Right ventricle myocardium superior (tissue), 1 donor: ENCODE measurements at regions of chr13 and their contacts with region 1.

Region 1: GRCh38 chr13:106536244-106537034 is 977 bp upstream of the EFNB2 start:
- DNase-seq: peak; percentile 94
- ATAC-seq: peak; percentile 86

Region 2: GRCh38 chr13:104571161-104571892 is 1965.1 kb before region 1 on chr13:
- intact Hi-C with region 1: loop called (anchors 10 kb)
- DNase-seq: no peak
- ATAC-seq: peak; percentile 80

Region 3: DNA sequence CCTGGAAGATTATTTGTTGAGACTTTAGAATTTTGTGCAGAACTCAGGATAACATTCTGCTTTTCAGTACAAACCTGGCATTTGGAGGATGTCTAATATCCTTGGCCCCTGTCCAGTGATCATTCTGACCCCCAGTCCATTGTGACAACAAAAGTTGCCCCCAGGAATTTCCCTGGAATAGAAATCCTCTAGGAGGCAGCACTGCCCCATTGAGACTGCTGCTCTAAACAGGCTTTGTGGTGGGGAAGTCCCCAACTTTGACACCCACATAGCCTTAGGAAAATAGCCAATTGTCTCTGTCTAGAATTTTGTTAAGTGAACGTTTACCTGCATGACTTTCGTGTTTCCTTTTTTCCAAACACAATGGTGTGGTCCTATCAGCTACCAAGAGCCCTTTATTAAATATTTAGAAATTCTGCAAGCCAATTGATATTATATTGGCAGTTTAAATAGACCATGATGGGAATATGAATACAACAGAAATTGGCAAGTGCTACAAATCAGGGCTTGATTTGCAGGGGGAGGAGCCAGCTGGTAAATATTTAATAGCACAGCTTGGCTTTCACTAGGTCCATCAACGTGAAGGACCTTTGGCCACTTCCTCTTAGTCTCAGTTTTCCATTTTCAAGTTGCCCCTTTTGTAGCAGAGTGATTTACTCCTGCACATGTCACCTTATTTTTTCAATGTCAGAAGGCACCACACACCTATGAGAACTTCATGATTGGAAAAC is 452.7 kb before region 1 on chr13:
- intact Hi-C with region 1: loop called (anchors 10 kb)
- DNase-seq: no peak
- ATAC-seq: no peak

Region 4: GRCh38 chr13:106917673-106918556 is 381.5 kb after region 1 on chr13:
- intact Hi-C with region 1: loop called (anchors 10 kb)
- DNase-seq: peak; percentile 85
- ATAC-seq: peak; percentile 96